ENCODE measurements at regions of chrX and their contacts with region 1.

Region 1: GRCh38 chrX:70525733-70526132 is 81.1 kb downstream of the DLG3 start:
- DNase-seq: peak; percentile 81
- H3K4me3 Mint-ChIP-seq: peak overlapping the region; percentile 13
- H3K27ac Mint-ChIP-seq: peak overlapping the region; percentile 60
- H3K4me1 Mint-ChIP-seq: peaks cover 29% of the 10 kb centered on the region
- H3K27me3 Mint-ChIP-seq: no peaks in the 10 kb centered on the region
- CTCF ChIP-seq: no peak

Region 2: DNA sequence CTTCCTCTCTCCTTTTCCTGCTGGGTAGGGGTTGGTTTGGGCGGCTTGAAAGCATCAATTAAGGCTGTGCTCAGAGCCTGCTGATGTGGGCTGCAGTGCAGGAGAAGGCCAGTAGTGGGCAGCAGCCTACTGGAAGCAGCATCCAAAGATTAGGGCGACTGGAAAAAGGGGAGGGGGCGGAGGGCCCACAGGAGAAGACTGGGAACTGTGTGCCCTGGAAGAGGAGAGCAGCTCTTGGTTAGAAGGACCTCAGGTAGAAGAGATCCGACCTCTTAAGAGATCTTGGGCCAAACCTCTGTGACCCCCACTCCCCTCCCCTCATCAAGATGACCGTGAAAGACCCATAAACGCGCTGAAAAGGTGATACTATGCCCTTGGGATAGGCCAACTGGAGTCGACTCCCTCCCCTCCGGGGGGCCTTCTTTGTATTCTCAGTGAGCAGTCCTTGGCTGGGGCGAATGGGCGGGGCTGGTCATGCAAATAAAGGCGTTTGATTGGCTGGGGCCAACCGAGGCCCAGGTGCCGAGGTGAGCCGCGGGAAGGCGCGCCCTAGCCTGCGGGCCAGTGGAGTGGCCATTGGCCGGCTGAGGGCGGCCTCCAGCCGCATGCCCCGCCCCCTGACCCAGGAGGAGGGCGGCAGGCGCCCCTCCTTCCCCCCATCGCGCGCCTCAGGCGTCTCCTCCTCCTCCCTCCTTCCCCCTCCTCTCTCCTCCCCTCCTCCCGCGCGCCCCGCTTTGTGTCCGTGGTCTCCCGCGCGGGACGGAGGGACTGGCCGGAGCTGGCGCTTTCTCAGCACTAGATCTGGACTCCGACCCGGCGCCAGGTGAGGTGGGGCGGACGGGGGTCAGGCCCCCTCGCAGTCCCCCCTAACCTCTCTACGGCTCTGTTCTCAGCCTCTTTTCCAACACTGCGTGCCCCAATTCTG is 71.0 kb before region 1 on chrX:
- CTCF ChIA-PET with region 1: no interaction called
- intact Hi-C with region 1: no loop called
- DNase-seq: peak; percentile 93
- H3K4me3 Mint-ChIP-seq: peak overlapping the region; percentile 99
- H3K27ac Mint-ChIP-seq: peak overlapping the region; percentile 97
- H3K4me1 Mint-ChIP-seq: peaks cover 27% of the 10 kb centered on the region
- H3K27me3 Mint-ChIP-seq: no peaks in the 10 kb centered on the region
- CTCF ChIP-seq: peak; percentile 89

Region 3: GRCh38 chrX:70476934-70477733 is 48.6 kb before region 1 on chrX:
- CTCF ChIA-PET with region 1: no interaction called
- intact Hi-C with region 1: loop called (anchors 5 kb)
- DNase-seq: peak; percentile 83
- H3K4me3 Mint-ChIP-seq: peak overlapping the region; percentile 56
- H3K27ac Mint-ChIP-seq: peak overlapping the region; percentile 96
- H3K4me1 Mint-ChIP-seq: peaks cover 66% of the 10 kb centered on the region
- H3K27me3 Mint-ChIP-seq: no peaks in the 10 kb centered on the region
- CTCF ChIP-seq: no peak

Region 4: GRCh38 chrX:71017389-71017944 is 491.7 kb after region 1 on chrX:
- CTCF ChIA-PET with region 1: no interaction called
- intact Hi-C with region 1: no loop called
- DNase-seq: no peak
- H3K4me3 Mint-ChIP-seq: no peak overlapping the region
- H3K27ac Mint-ChIP-seq: no peak overlapping the region
- H3K4me1 Mint-ChIP-seq: no peaks in the 10 kb centered on the region
- H3K27me3 Mint-ChIP-seq: no peaks in the 10 kb centered on the region
- CTCF ChIP-seq: no peak

Measured in Calu3 (cell line).